ENCODE measurements at regions of chr1 and their contacts with region 1.

Region 1: GRCh38 chr1:235093696-235094592 is 34.7 kb downstream of the TOMM20 start:
- DNase-seq: peak; percentile 89
- ATAC-seq: peak; percentile 77

Region 2: GRCh38 chr1:234486498-234487448 is 607.2 kb before region 1 on chr1:
- intact Hi-C with region 1: loop called (anchors 2 kb)
- DNase-seq: no peak
- ATAC-seq: peak; percentile 87

Measured in Right ventricle myocardium inferior (tissue), 1 donor.